ENCODE measurements at regions of chr10 and their contacts with region 1.

Region 1: GRCh38 chr10:97445722-97446639 is at the starts of genes EXOSC1 and ZDHHC16:
- DNase-seq: peak; percentile 97
- H3K4me3 Mint-ChIP-seq: peak within 1 kb of the TSS; percentile 99
- H3K27ac Mint-ChIP-seq: peak within 1 kb of the TSS; percentile 74
- H3K4me1 Mint-ChIP-seq: peaks cover 25% of the 10 kb centered on the region
- H3K27me3 Mint-ChIP-seq: no peaks in the 10 kb centered on the region
- CTCF ChIP-seq: no peak
- total RNA-seq, gene EXOSC1: 56.5 and 62.3 TPM in 2 replicates
- total RNA-seq, gene ZDHHC16: 44.9 and 48.0 TPM in 2 replicates

Region 2: GRCh38 chr10:97138174-97138573 is 307.8 kb before region 1 on chr10:
- CTCF ChIA-PET with region 1: no interaction called
- POLR2A ChIA-PET with region 1: no interaction called
- intact Hi-C with region 1: no loop called
- DNase-seq: peak; percentile 4
- H3K4me3 Mint-ChIP-seq: no peak overlapping the region
- H3K27ac Mint-ChIP-seq: no peak overlapping the region
- H3K4me1 Mint-ChIP-seq: no peaks in the 10 kb centered on the region
- H3K27me3 Mint-ChIP-seq: peaks cover 34% of the 10 kb centered on the region
- CTCF ChIP-seq: no peak

Region 3: GRCh38 chr10:97407211-97407951 is 38.6 kb before region 1 on chr10:
- CTCF ChIA-PET with region 1: interaction called, 4 read pairs
- POLR2A ChIA-PET with region 1: interaction called, 5 read pairs
- intact Hi-C with region 1: loop called (anchors 1 kb)
- DNase-seq: peak; percentile 85
- H3K4me3 Mint-ChIP-seq: no peak overlapping the region
- H3K27ac Mint-ChIP-seq: no peak overlapping the region
- H3K4me1 Mint-ChIP-seq: no peaks in the 10 kb centered on the region
- H3K27me3 Mint-ChIP-seq: no peaks in the 10 kb centered on the region
- CTCF ChIP-seq: peak; percentile 76

Region 4: DNA sequence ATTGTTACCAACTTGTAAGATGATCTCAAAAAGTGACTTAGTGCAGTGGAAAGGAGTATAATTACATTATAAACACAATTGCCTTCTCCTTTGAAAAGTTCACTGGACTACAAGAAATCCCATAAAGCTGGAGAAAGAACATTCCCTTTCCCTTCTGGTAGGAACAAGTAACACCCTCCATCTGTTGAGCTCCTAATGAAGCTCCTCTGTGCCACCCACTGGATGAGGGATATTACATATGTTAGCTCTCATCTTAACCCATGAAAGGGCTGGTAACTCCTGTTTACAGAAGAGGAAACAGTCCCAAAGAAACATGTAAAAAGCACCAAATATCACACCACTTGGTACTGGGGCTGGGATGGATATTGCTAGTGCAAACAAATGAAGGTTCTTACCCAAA is 11.9 kb before region 1 on chr10:
- CTCF ChIA-PET with region 1: interaction called, 6 read pairs
- POLR2A ChIA-PET with region 1: interaction called, 34 read pairs
- intact Hi-C with region 1: no loop called
- DNase-seq: no peak
- H3K4me3 Mint-ChIP-seq: no peak overlapping the region
- H3K27ac Mint-ChIP-seq: no peak overlapping the region
- H3K4me1 Mint-ChIP-seq: no peaks in the 10 kb centered on the region
- H3K27me3 Mint-ChIP-seq: no peaks in the 10 kb centered on the region
- CTCF ChIP-seq: no peak